Mammary epithelial cell (primary cell): ENCODE measurements at regions of chr1 and their contacts with region 1.

Region 1: DNA sequence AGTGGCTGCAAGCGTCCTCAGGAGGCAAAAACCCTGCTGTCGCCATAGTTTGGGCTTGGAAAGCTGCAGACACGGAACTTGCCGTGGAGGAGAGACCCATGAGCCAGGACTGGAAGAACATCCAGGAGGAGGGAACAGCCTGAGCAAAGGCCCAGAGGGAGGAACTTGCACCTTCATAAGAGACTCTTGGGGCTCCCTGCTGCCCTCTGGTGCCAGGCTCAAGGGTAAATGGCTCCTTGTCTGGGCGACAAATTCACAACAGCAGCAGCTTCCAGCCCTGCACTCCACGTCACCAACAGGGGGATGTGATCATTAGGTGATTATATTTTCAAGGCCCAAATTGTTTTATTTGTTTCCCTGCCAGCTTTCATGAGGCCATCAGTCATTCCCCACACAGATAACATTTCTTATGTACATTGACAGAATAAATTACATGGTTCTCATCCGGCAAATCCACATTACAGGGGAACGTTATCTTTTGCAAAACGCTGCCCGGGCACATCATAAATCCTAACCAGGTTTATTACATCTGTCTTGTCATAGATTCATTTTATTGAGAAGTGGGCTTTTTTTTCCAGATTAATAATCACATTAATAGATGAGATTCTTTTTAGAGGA is 143.0 kb upstream of the GRIK3 start:
- DNase-seq: peak; percentile 3
- H3K4me3 ChIP-seq: no peak overlapping the region
- H3K27ac ChIP-seq: no peak overlapping the region
- H3K4me1 ChIP-seq: no peaks in the 10 kb centered on the region
- H3K27me3 ChIP-seq: no peaks in the 10 kb centered on the region
- CTCF ChIP-seq: peak; percentile 33 to 68

Region 2: DNA sequence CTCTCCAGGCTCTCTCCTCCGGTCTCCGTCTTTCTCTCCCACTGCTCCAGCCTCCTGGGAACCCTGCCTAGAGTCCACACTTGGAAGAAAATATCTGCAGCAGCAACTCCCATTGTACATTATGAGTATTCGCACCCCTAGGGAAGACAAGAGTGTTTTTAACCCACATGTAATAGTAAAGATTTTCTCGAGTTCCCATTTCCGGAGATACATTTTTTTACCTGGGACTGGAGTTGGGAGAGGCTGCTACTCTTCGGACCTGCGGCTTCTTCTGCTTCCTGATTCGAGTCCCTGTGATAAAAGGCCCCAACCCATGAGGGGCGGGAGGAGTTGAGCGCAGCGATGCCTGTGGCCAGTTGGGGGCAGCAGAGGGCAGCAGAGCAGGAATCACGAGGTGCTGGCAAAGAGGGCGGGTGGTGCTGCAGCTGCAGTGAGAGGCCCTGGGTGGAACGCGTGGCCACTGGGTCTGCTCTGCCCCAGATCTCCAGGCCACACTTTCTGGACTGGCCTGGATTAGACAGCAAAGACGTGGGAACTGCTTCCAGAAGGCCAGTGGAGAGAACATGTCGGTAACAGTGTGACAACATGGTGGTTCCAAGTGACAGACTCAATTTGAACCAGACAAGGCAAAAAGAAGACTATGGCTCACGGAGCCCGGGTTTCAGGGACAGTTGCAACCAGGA is 473.7 kb before region 1 on chr1:
- CTCF ChIA-PET with region 1: no interaction called
- dilution Hi-C with region 1: no loop called
- in situ Hi-C with region 1: no loop called
- intact Hi-C with region 1: loop called (anchors 2 kb)
- DNase-seq: peak; percentile 37
- H3K4me3 ChIP-seq: no peak overlapping the region
- H3K27ac ChIP-seq: no peak overlapping the region
- H3K4me1 ChIP-seq: no peaks in the 10 kb centered on the region
- H3K27me3 ChIP-seq: peaks cover 2% of the 10 kb centered on the region
- CTCF ChIP-seq: peak; percentile 87 to 90

Region 3: DNA sequence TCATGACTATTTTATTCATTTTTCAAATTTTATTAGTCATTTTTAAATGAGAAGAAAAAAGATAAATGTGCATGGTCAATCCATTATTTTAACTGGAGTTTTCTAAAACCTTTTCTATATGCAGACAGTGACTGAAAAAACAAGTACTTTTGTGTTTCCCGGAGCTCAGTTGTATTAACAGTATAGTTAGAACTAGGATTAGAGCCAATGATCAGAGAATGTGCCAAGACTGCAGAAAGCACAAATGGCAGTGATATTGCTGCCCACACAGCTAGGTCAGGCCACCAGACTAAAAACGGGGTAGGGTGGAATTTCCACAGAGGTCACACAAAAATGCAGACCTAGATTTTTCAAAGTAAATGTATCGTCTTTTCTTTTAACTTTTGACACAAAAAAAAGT is 20.1 kb after region 1 on chr1:
- CTCF ChIA-PET with region 1: no interaction called
- dilution Hi-C with region 1: no loop called
- in situ Hi-C with region 1: no loop called
- intact Hi-C with region 1: no loop called
- DNase-seq: no peak
- H3K4me3 ChIP-seq: no peak overlapping the region
- H3K27ac ChIP-seq: no peak overlapping the region
- H3K4me1 ChIP-seq: no peaks in the 10 kb centered on the region
- H3K27me3 ChIP-seq: no peaks in the 10 kb centered on the region
- CTCF ChIP-seq: no peak

Region 4: GRCh38 chr1:37234941-37235418 is 57.6 kb after region 1 on chr1:
- CTCF ChIA-PET with region 1: no interaction called
- dilution Hi-C with region 1: loop called (anchors 10 kb)
- in situ Hi-C with region 1: no loop called
- intact Hi-C with region 1: no loop called
- DNase-seq: no peak
- H3K4me3 ChIP-seq: no peak overlapping the region
- H3K27ac ChIP-seq: no peak overlapping the region
- H3K4me1 ChIP-seq: peaks cover 7% of the 10 kb centered on the region
- H3K27me3 ChIP-seq: no peaks in the 10 kb centered on the region
- CTCF ChIP-seq: no peak

Region 5: DNA sequence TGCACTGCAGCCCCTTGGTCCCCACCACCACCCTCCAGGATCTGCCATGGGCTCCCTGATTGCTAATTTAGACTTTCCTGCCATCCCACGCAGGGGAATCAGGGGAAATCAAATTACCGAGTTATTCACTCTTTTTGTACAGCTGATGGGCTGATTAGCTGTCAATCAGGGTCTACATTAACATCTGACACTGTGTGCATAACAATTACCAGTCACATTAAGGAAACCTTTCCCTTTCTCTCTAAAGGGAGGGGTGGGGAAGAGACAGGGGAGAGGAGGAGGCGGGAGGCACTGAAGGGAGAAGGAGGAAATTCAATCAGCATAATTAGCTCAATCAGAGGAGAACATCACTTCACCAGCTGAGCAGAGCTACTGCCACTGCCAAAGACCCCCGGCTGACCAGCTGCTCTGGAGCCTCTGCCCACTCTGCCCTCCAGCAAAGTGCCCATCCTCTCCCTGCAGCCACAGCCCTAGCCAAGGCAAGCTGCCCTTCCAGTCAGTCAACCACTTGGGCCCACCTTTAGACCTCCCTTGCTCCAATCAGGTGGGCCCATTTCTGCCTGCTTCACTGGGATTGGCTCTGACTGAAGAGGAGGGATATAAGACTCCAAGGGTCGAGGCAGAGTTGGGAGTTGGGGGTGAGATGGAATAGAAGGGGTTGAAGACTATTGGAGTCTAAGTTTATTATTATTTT is 97.7 kb after region 1 on chr1:
- CTCF ChIA-PET with region 1: no interaction called
- dilution Hi-C with region 1: loop called (anchors 5 kb)
- in situ Hi-C with region 1: no loop called
- intact Hi-C with region 1: no loop called
- DNase-seq: no peak
- H3K4me3 ChIP-seq: no peak overlapping the region
- H3K27ac ChIP-seq: no peak overlapping the region
- H3K4me1 ChIP-seq: no peaks in the 10 kb centered on the region
- H3K27me3 ChIP-seq: no peaks in the 10 kb centered on the region
- CTCF ChIP-seq: no peak

Region 6: GRCh38 chr1:37306461-37306860 is 129.1 kb after region 1 on chr1:
- CTCF ChIA-PET with region 1: no interaction called
- dilution Hi-C with region 1: no loop called
- in situ Hi-C with region 1: no loop called
- intact Hi-C with region 1: loop called (anchors 10 kb)
- DNase-seq: no peak
- H3K4me3 ChIP-seq: no peak overlapping the region
- H3K27ac ChIP-seq: no peak overlapping the region
- H3K4me1 ChIP-seq: no peaks in the 10 kb centered on the region
- H3K27me3 ChIP-seq: no peaks in the 10 kb centered on the region
- CTCF ChIP-seq: no peak